ENCODE measurements at regions of chr3 and their contacts with region 1.

Region 1: DNA sequence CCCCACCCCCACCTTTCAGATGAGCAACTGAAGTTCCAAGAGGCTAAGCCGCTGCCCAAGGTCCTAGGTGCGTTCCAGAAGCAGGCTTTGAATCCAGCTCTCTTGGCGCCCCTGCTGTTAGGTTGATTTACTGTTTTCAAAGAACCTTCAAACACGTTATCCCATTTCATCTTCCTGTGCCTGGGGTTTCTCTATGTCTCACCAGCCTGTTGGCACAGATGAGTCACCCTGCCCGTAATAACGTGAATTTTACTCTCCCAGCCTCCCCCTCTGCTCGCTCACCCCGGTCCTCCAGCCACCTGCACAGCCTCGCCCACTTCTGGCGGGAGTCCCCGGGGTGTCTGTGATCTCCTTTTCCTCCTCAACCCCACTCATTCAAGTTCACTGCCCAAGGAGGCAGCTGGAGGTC is 13.0 kb upstream of the TSEN2 start:
- DNase-seq: no peak

Region 2: DNA sequence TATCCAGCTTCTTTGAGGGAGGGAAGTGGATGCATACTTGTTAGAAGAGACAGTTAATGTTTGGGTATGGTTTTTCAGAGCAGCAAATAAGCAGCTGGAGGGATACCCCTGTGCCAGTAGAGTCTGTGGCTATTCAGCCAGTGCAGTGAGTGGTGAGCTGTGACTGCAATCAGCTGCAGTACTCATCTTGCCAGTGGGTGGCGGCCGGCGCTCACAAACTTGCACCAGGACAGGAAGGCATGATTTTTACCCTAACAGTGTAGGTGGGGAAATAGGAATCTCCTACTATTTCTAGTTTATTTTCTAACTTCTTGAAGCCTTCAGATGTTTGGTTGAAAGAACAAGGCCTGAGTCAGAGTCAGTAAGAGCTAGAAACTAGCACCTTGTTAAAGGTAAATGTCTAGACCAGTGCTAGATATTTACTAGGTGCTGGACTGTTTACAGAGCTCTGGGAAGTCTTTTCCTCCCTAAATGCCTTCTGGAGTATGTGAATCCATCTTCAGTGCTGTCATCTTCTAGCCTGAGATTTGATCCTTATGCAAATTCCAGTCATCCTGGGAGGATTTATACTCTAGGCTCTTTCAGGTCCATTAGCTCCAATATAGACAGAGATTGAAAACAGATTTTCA is 336.1 kb before region 1 on chr3:
- in situ Hi-C with region 1: loop called (anchors 25 kb)
- DNase-seq: peak; percentile 70

Region 3: DNA sequence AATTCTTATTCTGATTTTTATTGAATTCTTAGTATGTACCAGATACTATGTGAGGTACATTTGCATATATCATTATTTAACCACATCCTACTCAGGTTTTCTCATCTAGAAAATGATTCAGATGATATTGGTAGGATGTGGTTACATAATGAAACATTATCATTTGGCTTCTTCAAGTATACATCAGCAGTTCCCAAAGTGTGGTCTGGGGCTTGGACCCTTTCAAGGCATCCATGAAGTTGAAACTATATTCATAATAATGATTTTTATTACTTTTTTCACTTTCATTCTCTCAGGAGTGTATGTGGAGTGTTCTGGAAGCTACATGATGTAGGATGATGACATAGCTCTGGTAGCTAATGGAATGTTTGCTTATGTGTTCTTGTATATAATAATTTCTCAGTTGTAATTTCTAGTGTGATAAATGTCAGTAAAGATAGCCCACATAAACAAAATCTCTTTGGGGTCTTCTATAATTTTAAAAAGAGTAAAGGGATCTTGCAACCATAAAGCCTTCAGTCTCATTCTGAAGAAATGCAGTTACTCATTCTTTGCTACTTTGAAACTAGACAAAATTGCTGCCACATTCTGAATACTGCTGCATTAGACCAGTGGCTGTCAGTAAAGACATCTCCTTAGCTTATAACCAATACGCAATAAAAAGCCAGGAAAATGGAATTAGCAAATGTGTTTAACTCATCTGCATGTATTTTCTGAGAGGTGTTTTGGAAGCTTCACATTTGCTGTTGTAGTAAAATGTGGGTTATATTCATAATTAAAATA is 86.6 kb before region 1 on chr3:
- in situ Hi-C with region 1: no loop called
- DNase-seq: no peak